Mammary epithelial cell (primary cell): ENCODE measurements at regions of chr19 and their contacts with region 1.

Region 1: GRCh38 chr19:14265290-14266036 is 59.5 kb upstream of the ADGRL1 start:
- DNase-seq: no peak
- H3K4me3 ChIP-seq: no peak overlapping the region
- H3K27ac ChIP-seq: no peak overlapping the region
- H3K4me1 ChIP-seq: no peaks in the 10 kb centered on the region
- H3K27me3 ChIP-seq: peaks cover 4% of the 10 kb centered on the region
- CTCF ChIP-seq: no peak

Region 2: DNA sequence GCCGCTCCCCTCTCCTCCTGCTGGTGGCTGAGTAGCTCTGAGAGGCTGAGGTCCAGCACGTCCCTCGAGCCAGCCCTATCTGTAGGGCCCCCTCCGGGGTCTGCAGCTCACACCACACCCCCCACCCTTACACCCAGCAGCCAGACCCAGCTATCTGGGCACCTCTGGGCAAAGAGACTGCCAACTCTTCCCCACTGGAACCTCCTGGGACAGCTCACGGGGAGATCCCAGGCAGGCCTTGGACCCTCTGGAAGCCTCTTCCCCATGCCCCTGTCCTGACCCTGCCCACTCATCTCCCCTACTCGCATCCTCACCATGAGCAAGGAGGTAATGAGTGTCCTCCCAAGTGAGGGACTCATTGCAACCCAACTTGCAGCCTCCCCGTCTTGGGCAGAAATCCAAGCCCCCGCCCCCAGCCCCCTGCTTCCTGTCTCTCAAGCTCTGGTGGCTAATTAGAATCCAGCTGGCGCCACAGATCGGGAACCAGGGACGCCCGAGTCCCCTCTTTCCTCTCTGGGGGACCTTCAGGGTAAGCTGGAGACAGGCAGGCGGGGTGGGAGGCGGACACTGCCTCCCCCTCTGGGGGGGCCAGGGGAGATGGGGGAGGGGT is 81.6 kb before region 1 on chr19:
- CTCF ChIA-PET with region 1: no interaction called
- dilution Hi-C with region 1: no loop called
- in situ Hi-C with region 1: no loop called
- intact Hi-C with region 1: no loop called
- DNase-seq: no peak
- H3K4me3 ChIP-seq: no peak overlapping the region
- H3K27ac ChIP-seq: no peak overlapping the region
- H3K4me1 ChIP-seq: no peaks in the 10 kb centered on the region
- H3K27me3 ChIP-seq: no peaks in the 10 kb centered on the region
- CTCF ChIP-seq: no peak

Region 3: GRCh38 chr19:14337510-14337909 is 72.0 kb after region 1 on chr19:
- CTCF ChIA-PET with region 1: no interaction called
- dilution Hi-C with region 1: loop called (anchors 5 kb)
- in situ Hi-C with region 1: no loop called
- intact Hi-C with region 1: no loop called
- DNase-seq: no peak
- H3K4me3 ChIP-seq: no peak overlapping the region
- H3K27ac ChIP-seq: no peak overlapping the region
- H3K4me1 ChIP-seq: peaks cover 6% of the 10 kb centered on the region
- H3K27me3 ChIP-seq: no peaks in the 10 kb centered on the region
- CTCF ChIP-seq: no peak

Region 4: GRCh38 chr19:14395710-14396336 is 130.4 kb after region 1 on chr19:
- CTCF ChIA-PET with region 1: no interaction called
- dilution Hi-C with region 1: loop called (anchors 5 kb)
- in situ Hi-C with region 1: no loop called
- intact Hi-C with region 1: no loop called
- DNase-seq: no peak
- H3K4me3 ChIP-seq: no peak overlapping the region
- H3K27ac ChIP-seq: no peak overlapping the region
- H3K4me1 ChIP-seq: no peaks in the 10 kb centered on the region
- H3K27me3 ChIP-seq: no peaks in the 10 kb centered on the region
- CTCF ChIP-seq: no peak